Activated B cell treated with CpG ODN at 0.5 μM for 24 hours (primary cell): ENCODE measurements at regions of chr11 and their contacts with region 1.

Region 1: GRCh38 chr11:121451986-121452608 is at the start of gene SORL1:
- DNase-seq: peak; percentile 57
- ATAC-seq: peak; percentile 62
- H3K4me3 Mint-ChIP-seq: peak within 1 kb of the TSS; percentile 92
- H3K27ac Mint-ChIP-seq: peak within 1 kb of the TSS; percentile 95
- H3K4me1 Mint-ChIP-seq: peaks cover 92% of the 10 kb centered on the region
- H3K27me3 Mint-ChIP-seq: no peaks in the 10 kb centered on the region
- CTCF ChIP-seq: no peak
- total RNA-seq, gene SORL1: 159 and 180 TPM in 2 replicates

Region 2: GRCh38 chr11:121004206-121004840 is 447.8 kb before region 1 on chr11:
- CTCF ChIA-PET with region 1: no interaction called
- POLR2A ChIA-PET with region 1: no interaction called
- intact Hi-C with region 1: no loop called
- DNase-seq: no peak
- ATAC-seq: no peak
- H3K4me3 Mint-ChIP-seq: no peak overlapping the region
- H3K27ac Mint-ChIP-seq: no peak overlapping the region
- H3K4me1 Mint-ChIP-seq: no peaks in the 10 kb centered on the region
- H3K27me3 Mint-ChIP-seq: peaks cover 32% of the 10 kb centered on the region
- CTCF ChIP-seq: no peak

Region 3: DNA sequence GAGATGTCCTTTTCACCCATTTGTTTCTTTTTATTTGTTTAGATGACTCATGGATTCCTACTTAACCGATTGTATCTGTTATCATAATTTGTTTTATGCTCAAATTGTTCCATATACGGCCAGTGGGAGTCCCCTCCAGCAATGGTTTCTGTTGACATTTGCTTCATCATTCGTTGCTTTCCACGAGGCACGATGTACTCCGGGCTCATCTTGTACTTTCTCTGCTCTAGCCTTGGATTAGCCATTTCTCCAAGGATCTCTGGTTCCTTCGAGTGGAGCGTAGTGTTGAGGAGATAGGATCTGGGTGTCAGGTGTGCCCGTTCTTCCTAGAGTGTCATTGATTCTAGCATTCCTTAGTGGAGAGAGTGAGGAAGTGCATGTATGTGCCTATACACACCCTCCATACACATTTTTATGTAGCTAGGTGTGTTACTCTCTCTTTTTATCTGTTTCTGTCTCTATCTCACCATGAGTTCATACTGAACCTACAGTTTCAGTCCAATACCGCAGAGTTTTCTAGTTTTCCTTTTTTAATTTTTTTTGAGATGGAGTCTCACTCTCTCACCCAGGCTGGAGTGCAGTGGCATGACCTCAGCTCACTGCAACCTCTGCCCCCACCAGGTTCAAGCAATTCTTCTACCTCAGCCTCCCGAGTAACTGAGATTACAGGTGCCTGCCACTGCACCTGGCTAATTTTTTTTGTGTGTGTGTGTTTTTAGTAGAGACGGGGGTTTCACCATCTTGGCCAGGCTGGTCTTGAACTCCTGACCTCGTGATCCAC is 319.7 kb before region 1 on chr11:
- CTCF ChIA-PET with region 1: no interaction called
- POLR2A ChIA-PET with region 1: no interaction called
- intact Hi-C with region 1: no loop called
- DNase-seq: no peak
- ATAC-seq: no peak
- H3K4me3 Mint-ChIP-seq: no peak overlapping the region
- H3K27ac Mint-ChIP-seq: no peak overlapping the region
- H3K4me1 Mint-ChIP-seq: no peaks in the 10 kb centered on the region
- H3K27me3 Mint-ChIP-seq: peaks cover 12% of the 10 kb centered on the region
- CTCF ChIP-seq: no peak

Region 4: GRCh38 chr11:121292495-121293287 is 159.4 kb before region 1 on chr11 and contains the start of gene SC5D:
- CTCF ChIA-PET with region 1: no interaction called
- POLR2A ChIA-PET with region 1: interaction called, 8 read pairs
- intact Hi-C with region 1: loop called (anchors 1 kb)
- DNase-seq: peak; percentile 94
- ATAC-seq: peak; percentile 85
- H3K4me3 Mint-ChIP-seq: peak within 1 kb of the TSS; percentile 94
- H3K27ac Mint-ChIP-seq: peak within 1 kb of the TSS; percentile 97
- H3K4me1 Mint-ChIP-seq: peaks cover 50% of the 10 kb centered on the region
- H3K27me3 Mint-ChIP-seq: no peaks in the 10 kb centered on the region
- CTCF ChIP-seq: no peak
- total RNA-seq, gene SC5D: 35.2 and 40.4 TPM in 2 replicates

Region 5: DNA sequence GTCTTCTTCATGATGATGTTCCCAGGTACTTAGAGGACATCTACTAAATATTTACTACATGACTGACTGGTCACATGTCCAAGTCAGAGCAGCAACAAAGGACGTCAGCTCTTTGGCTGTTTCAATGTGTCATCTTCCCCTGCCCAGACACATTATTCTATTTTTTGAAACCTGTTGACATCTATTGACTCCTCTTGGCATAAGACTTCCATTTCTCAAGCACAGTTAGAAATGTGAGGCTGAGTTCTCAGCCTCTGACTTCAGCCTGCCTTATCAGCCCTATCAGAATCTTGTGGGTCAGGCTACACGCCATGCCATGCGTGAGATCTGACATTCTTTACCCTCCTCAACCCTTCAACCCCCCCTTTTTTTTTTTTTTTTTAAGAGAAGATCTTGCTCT is 95.7 kb before region 1 on chr11:
- CTCF ChIA-PET with region 1: no interaction called
- POLR2A ChIA-PET with region 1: no interaction called
- intact Hi-C with region 1: no loop called
- DNase-seq: no peak
- ATAC-seq: no peak
- H3K4me3 Mint-ChIP-seq: no peak overlapping the region
- H3K27ac Mint-ChIP-seq: no peak overlapping the region
- H3K4me1 Mint-ChIP-seq: no peaks in the 10 kb centered on the region
- H3K27me3 Mint-ChIP-seq: no peaks in the 10 kb centered on the region
- CTCF ChIP-seq: no peak

Region 6: GRCh38 chr11:121367001-121367843 is 84.9 kb before region 1 on chr11:
- CTCF ChIA-PET with region 1: interaction called, 4 read pairs
- POLR2A ChIA-PET with region 1: interaction called, 19 read pairs
- intact Hi-C with region 1: loop called (anchors 2 kb)
- DNase-seq: peak; percentile 22
- ATAC-seq: peak; percentile 98
- H3K4me3 Mint-ChIP-seq: peak overlapping the region; percentile 74
- H3K27ac Mint-ChIP-seq: peak overlapping the region; percentile 81
- H3K4me1 Mint-ChIP-seq: peaks cover 55% of the 10 kb centered on the region
- H3K27me3 Mint-ChIP-seq: no peaks in the 10 kb centered on the region
- CTCF ChIP-seq: no peak

Region 7: GRCh38 chr11:121464352-121464946 is 12.4 kb after region 1 on chr11:
- CTCF ChIA-PET with region 1: interaction called, 13 read pairs
- POLR2A ChIA-PET with region 1: interaction called, 148 read pairs
- intact Hi-C with region 1: loop called (anchors 1 kb)
- DNase-seq: no peak
- ATAC-seq: peak; percentile 51
- H3K4me3 Mint-ChIP-seq: peak overlapping the region; percentile 61
- H3K27ac Mint-ChIP-seq: peak overlapping the region; percentile 89
- H3K4me1 Mint-ChIP-seq: peaks cover 97% of the 10 kb centered on the region
- H3K27me3 Mint-ChIP-seq: no peaks in the 10 kb centered on the region
- CTCF ChIP-seq: no peak

Region 8: GRCh38 chr11:121566279-121567168 is 114.4 kb after region 1 on chr11:
- CTCF ChIA-PET with region 1: no interaction called
- POLR2A ChIA-PET with region 1: interaction called, 11 read pairs
- intact Hi-C with region 1: loop called (anchors 1 kb)
- DNase-seq: no peak
- ATAC-seq: no peak
- H3K4me3 Mint-ChIP-seq: no peak overlapping the region
- H3K27ac Mint-ChIP-seq: no peak overlapping the region
- H3K4me1 Mint-ChIP-seq: peaks cover 33% of the 10 kb centered on the region
- H3K27me3 Mint-ChIP-seq: peaks cover 2% of the 10 kb centered on the region
- CTCF ChIP-seq: no peak

Region 9: DNA sequence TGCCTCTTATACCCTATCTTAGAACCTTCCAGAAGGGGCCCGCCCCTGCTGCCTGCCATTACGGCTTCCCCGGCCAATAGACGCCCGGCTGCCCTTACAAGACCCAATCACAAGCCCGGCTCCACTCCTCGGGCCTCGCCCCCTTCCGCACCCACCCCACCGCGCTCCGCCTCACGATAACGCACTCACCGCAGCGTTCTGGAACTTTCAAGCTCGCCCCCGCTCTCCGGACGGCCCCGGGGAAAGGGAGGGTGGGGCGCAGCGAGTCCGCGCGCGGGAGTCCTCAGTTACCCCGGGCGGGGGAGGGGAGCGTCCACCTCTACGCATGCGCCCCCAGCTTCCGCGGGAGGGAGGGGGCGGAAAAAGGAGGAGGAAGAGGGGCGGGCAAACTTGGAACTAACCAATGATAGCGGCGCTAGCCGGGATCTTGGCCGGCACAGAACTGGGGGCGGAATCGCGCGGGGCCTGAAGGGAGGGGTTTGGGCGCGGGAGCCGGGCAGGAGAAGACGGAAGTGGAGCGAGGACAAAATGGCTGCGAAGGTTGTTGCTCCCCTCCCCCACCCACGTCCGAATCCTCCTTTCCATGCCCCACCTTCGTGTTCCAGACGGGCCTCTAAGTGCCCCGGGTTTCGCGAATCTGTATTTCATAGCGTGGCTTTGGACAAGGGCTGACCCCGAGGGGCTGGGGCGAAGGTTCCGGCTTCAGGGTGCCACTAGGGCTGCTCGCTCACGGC is 1610.2 kb after region 1 on chr11:
- CTCF ChIA-PET with region 1: no interaction called
- POLR2A ChIA-PET with region 1: no interaction called
- intact Hi-C with region 1: loop called (anchors 10 kb)
- DNase-seq: peak; percentile 98
- ATAC-seq: peak; percentile 82
- H3K4me3 Mint-ChIP-seq: peak overlapping the region; percentile 97
- H3K27ac Mint-ChIP-seq: peak overlapping the region; percentile 100
- H3K4me1 Mint-ChIP-seq: peaks cover 69% of the 10 kb centered on the region
- H3K27me3 Mint-ChIP-seq: no peaks in the 10 kb centered on the region
- CTCF ChIP-seq: no peak